ENCODE measurements at regions of chr10 and their contacts with region 1.

Region 1: DNA sequence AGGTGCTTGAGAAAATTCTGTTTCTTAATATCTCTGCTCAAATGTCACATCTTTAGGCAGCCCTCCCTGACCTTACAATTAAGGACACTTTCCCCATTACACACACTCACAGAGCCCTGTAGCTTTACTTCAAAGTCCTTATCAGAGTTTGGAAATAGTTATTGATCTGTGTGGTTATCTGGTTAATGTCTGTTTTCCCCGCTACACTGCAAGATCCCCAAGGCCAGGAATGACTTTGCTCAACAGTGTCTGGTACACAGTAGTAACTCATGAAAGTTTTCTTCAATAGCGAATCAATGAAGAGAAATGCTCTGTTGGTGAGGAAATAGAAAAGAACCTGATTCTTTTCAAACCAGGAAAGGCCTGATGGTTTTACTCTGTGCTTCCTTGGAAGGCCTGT is 554.4 kb downstream of the REEP3 start:
- DNase-seq: no peak
- H3K4me3 ChIP-seq: no peak overlapping the region
- H3K27ac ChIP-seq: no peak overlapping the region
- H3K4me1 ChIP-seq: no peaks in the 10 kb centered on the region
- H3K27me3 ChIP-seq: no peaks in the 10 kb centered on the region
- CTCF ChIP-seq: no peak

Region 2: DNA sequence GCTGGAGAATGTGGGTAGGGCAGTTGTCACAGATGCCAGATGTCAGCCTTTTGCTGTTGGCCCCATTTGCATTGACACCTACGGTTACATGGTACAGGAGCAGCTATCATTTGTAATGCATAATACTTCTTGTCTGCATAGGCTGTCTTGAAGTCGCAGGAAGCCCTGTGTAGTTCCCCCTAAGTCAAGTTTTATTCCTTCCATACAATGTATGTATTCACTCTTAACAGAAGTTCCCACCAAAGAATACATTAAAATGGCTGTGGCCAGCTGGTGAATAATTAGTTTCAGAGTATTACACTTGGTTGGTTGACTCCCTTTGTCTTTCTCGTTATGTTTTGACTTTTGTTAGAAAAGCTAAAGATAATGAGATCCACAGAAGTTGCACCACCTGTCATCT is 614.6 kb after region 1 on chr10:
- CTCF ChIA-PET with region 1: no interaction called
- POLR2A ChIA-PET with region 1: interaction called, 10 read pairs
- intact Hi-C with region 1: no loop called
- DNase-seq: no peak
- H3K4me3 ChIP-seq: no peak overlapping the region
- H3K27ac ChIP-seq: no peak overlapping the region
- H3K4me1 ChIP-seq: no peaks in the 10 kb centered on the region
- H3K27me3 ChIP-seq: no peaks in the 10 kb centered on the region
- CTCF ChIP-seq: no peak

Measured in PC-9 (cell line).